ENCODE measurements at regions of chr5 and their contacts with region 1.

Region 1: DNA sequence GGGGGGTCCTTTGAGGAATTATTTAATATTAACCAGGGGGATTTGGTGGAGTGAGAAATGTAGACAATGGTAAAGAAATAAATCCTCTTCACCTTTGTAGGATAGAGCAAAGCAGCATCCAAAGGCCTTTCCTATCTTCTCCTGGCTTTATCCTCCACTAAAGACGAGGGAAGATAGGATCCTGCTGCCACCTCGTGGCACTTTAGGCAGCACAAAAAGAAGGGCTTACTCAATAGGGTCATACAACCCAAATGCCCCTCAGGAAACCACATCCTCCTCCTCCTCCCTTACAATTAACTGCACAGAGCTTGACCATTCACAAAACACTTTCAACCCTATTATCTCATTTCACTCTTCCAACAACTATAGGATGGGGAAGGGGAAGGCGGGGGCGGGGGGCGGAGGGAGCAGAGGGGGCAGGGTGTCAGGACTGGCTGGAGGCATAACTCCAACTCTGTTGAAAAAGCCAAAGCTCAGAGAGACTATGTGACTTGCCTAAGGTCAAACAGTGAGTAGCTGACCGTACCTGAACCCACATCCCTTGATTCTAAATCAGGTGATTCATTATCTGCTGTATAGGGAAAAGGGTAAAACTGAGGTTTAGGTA is 45.4 kb upstream of the MYOT start:
- DNase-seq: peak; percentile 40
- ATAC-seq: peak; percentile 90
- H3K4me3 ChIP-seq: no peak overlapping the region
- H3K27ac ChIP-seq: no peak overlapping the region
- H3K4me1 ChIP-seq: 0 out of 4 replicates have a peak, but pooled peaks cover 0 to 4% of the 10 kb centered on the region in 2 experiments
- H3K27me3 ChIP-seq: no peaks in the 10 kb centered on the region
- CTCF ChIP-seq: peak; percentile 47 to 66 (median 59); a peak in 5 of 6 replicates
- POLR2A ChIP-seq: no peak
- RAD21 ChIP-seq: peak; percentile 78

Region 2: GRCh38 chr5:137344723-137345322 is 477.4 kb before region 1 on chr5:
- CTCF ChIA-PET with region 1: no interaction called
- POLR2A ChIA-PET with region 1: no interaction called
- RAD21 ChIA-PET with region 1: no interaction called
- intact Hi-C with region 1: loop called (anchors 10 kb)
- DNase-seq: peak; percentile 36
- ATAC-seq: peak; percentile 52
- H3K4me3 ChIP-seq: no peak overlapping the region
- H3K27ac ChIP-seq: no peak overlapping the region
- H3K4me1 ChIP-seq: peaks cover 0 to 4% of the 10 kb centered on the region in 2 experiments; a peak in 1 of 4 replicates
- H3K27me3 ChIP-seq: peaks cover 27% of the 10 kb centered on the region
- CTCF ChIP-seq: peak; percentile 54 to 92 (median 89); a peak in 5 of 6 replicates
- POLR2A ChIP-seq: no peak
- RAD21 ChIP-seq: peak; percentile 61

Region 3: GRCh38 chr5:137714946-137715345 is 107.3 kb before region 1 on chr5:
- CTCF ChIA-PET with region 1: no interaction called
- POLR2A ChIA-PET with region 1: no interaction called
- RAD21 ChIA-PET with region 1: no interaction called
- intact Hi-C with region 1: no loop called
- DNase-seq: no peak
- ATAC-seq: no peak
- H3K4me3 ChIP-seq: no peak overlapping the region
- H3K27ac ChIP-seq: no peak overlapping the region
- H3K4me1 ChIP-seq: no peaks in the 10 kb centered on the region
- H3K27me3 ChIP-seq: no peaks in the 10 kb centered on the region
- CTCF ChIP-seq: no peak
- POLR2A ChIP-seq: no peak
- RAD21 ChIP-seq: no peak